K562 (cell line): ENCODE measurements at regions of chr2 and their contacts with region 1.

Region 1: DNA sequence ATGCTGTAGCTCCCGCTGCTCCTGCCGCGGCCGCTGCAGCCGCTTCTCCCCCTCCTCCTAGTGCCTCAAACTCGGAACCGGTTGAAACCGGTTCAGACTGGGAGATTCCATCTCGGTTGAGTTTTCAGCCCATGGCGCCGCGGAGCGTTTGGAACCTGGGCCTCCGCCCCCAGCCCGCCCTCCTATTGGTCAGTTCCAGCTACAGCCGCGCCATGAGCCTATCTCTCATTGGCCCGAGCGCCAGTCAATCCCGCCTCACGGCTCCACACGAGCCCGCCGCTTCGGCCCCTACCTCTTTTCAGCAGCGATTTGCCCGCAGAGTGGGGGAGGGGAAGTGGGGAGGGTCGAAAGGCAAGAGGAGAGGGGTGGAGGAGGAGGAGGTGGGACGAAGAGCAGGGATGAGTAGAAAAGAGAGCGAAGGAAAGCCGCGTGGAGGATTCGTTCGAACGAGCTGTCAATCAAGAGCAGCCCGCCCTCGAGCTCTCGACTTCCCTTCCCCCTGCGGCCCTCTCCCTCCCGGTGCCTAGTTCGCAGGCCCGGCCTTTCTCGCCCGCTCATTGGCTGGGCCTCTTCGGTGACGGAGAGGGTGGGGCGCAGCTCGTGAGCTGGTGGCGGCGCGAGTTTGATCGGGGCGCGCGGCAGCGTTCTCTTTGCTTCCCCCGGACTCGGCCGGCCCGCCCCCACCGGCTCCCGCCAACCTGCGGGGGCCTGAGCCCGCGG is at the start of gene XPO1:
- DNase-seq: peak; percentile 95 to 100 (median 97)
- ATAC-seq: peak; percentile 90
- H3K4me3 ChIP-seq: peak within 1 kb of the TSS; percentile 76
- H3K27ac ChIP-seq: peak within 1 kb of the TSS; percentile 98
- H3K4me1 ChIP-seq: peaks cover 19 to 28% of the 10 kb centered on the region in 2 experiments
- H3K27me3 ChIP-seq: no peaks in the 10 kb centered on the region
- CTCF ChIP-seq: no peak; a peak in 1 of 6 replicates
- EP300 ChIP-seq: 0 out of 2 replicates have a peak, but pooled peaks have one; percentile 46
- POLR2A ChIP-seq: peak; percentile 44; the same call in 1 of the 2 replicates
- RAD21 ChIP-seq: no peak
- polyA plus RNA-seq, gene XPO1: 86.2 to 91.8 TPM

Region 2: DNA sequence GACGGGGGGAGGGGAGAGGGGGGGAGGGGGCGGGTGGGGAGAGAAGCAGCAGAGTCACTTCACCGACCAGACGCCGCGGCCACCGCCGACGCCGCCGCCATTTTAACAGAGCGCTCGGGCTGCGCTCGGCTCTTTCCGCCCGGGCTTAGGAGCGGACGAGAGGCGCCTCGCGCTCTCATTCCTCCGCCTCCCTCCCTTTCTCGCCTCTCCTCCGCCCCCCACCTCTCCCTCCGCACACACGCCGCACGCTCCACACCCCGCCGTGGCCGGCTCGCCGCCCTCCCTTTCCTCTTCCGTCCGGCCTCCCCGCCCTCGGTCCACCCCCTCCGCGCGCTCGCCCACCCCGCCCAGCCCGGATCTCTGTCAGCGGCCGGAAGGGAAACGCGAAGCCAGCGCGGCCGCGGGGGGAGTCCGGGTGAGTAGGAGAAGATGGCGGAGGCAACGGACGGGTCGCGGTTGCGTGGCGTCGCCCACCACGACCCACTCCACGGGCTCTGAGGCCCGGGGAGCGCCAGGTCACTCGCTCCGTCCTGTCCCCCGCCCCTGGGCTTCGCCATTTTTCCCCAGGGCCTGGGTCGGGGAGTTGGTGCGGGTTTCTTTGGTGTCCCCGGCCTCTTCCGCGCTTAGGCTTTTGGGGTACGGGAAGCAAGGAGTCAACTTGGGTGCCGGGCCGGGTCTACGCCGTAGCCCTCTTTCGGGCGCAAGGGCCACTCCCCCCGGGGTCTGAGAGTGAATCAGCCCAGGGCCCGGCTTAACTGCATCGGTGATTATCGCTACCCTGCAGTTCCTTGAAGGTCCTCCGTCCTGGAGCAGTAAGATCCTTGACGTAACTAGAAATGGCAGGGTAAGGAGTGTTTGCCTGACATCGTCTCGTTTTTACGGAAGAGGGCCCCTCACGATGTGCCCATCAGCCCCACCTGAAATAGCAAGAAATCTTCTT is 67.1 kb before region 1 on chr2 and contains the start of gene USP34:
- CTCF ChIA-PET with region 1: no interaction called
- POLR2A ChIA-PET with region 1: no interaction called
- in situ Hi-C with region 1: no loop called
- intact Hi-C with region 1: loop called (anchors 2 kb)
- DNase-seq: peak; percentile 86 to 95 (median 90)
- ATAC-seq: peak; percentile 90
- H3K4me3 ChIP-seq: peak within 1 kb of the TSS; percentile 100
- H3K27ac ChIP-seq: peak within 1 kb of the TSS; percentile 100
- H3K4me1 ChIP-seq: peaks cover 14 to 20% of the 10 kb centered on the region in 2 experiments; a peak in 4 of 5 replicates
- H3K27me3 ChIP-seq: no peaks in the 10 kb centered on the region
- CTCF ChIP-seq: no peak
- EP300 ChIP-seq: peak; percentile 15; the same call in 1 of the 2 replicates
- POLR2A ChIP-seq: peak; percentile 93
- RAD21 ChIP-seq: 0 out of 4 replicates have a peak, but pooled peaks of 1 of the 2 experiments have one; percentile 8
- polyA plus RNA-seq, gene USP34: 19.8 to 38.7 TPM

Region 3: DNA sequence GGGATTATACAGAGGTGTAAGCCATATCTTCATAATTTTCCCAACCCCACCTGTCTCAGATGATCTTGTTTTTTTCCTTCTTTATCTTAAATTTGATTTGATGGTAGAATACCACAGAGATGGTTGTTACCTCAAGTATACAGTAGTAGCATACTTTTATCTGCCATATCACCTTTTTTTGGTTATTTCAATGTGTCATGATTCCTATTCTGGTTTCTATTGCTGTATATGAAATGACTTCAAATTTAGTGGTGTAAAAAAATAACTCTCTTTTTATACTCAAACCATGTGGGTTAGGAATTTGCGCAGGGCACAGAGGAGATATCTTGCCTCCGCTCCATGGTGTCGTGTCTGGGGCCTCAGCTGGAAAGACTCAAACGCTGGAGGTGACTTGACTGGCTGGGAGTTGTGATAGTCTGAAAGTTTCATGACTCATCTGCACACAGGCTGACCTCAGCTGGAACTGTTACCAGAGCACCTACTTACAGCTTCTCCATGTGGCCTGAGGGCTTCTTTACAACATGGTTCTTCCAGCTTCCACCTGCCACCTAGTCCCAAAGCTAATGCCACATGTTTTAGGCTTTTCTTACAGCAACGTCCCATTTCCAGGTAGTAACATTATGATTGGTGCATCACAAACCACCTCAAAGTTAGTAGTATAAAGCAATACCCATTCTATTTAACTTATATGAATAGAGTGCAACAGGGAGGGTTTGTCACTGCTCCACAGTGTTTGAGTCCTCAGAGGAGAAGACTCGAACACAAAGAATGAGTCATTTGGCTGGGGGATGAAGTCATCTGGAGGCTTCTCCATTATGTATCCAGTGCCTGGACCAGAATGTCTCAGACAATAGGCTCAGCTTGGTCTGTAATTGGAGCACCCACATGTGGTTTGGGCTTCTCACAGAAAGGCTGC is 82.1 kb after region 1 on chr2:
- CTCF ChIA-PET with region 1: no interaction called
- POLR2A ChIA-PET with region 1: interaction called, 3 read pairs
- in situ Hi-C with region 1: no loop called
- intact Hi-C with region 1: loop called (anchors 1 kb)
- DNase-seq: peak; percentile 59 to 86 (median 70)
- ATAC-seq: peak; percentile 96
- H3K4me3 ChIP-seq: no peak overlapping the region
- H3K27ac ChIP-seq: peak overlapping the region; percentile 86
- H3K4me1 ChIP-seq: peaks cover 0 to 13% of the 10 kb centered on the region in 2 experiments; a peak in 3 of 5 replicates
- H3K27me3 ChIP-seq: no peaks in the 10 kb centered on the region
- CTCF ChIP-seq: no peak
- EP300 ChIP-seq: peak; percentile 50; the same call in 1 of the 2 replicates
- POLR2A ChIP-seq: no peak
- RAD21 ChIP-seq: peak; percentile 5 to 30; a peak in 2 of 4 replicates

Region 4: DNA sequence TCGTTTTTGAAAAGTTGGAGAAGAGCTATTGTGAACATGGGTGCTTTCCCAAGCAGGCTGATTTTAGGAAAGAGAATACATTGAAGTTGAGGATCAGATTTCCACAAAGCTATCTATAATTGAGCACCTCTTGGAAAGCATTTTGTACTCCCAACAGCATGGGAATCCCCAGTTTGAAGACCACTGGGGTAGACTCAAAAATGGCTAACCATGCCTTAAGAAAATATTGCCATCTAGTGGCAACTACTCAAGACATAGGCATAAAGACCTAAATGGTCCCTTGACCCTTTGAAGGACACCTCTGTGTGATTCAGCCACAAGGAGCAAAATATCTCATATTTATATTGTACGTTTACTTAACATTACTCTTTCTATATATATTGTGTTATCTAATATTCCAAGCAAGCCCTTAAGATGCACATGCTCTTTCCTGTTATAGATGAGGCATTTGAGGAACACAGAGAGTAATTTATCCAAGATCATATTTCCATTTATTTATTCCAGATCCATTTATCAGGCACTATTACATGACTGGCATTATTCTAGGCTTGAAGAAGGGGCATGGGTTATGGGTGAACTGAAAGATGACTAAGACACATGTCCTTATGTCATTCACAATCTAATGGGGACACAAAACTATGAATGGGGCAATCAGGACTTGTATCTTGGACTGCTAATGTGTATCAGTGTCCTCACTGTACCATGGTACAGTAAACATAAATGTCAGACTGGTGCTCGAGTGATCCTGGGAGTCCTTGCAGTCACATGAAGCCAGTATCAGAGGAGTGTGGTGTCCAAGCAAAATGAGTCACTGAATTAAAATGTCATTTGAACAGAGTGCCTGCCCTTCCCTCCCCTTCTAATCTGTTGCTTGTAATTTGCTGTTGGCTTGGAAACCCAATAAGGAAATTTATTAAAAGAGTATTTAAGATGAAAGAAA is 120.8 kb after region 1 on chr2:
- CTCF ChIA-PET with region 1: no interaction called
- POLR2A ChIA-PET with region 1: interaction called, 3 read pairs
- in situ Hi-C with region 1: no loop called
- intact Hi-C with region 1: loop called (anchors 5 kb)
- DNase-seq: peak; percentile 40 to 66 (median 50)
- ATAC-seq: peak; percentile 94
- H3K4me3 ChIP-seq: no peak overlapping the region
- H3K27ac ChIP-seq: 0 out of 3 replicates have a peak overlapping the region, but pooled peaks have one; percentile 7
- H3K4me1 ChIP-seq: 0 out of 5 replicates have a peak, but pooled peaks cover 0 to 2% of the 10 kb centered on the region in 2 experiments
- H3K27me3 ChIP-seq: no peaks in the 10 kb centered on the region; a peak in 1 of 5 replicates
- CTCF ChIP-seq: peak; percentile 45 to 72 (median 69)
- EP300 ChIP-seq: no peak
- POLR2A ChIP-seq: no peak
- RAD21 ChIP-seq: peak; percentile 57 to 88

Region 5: DNA sequence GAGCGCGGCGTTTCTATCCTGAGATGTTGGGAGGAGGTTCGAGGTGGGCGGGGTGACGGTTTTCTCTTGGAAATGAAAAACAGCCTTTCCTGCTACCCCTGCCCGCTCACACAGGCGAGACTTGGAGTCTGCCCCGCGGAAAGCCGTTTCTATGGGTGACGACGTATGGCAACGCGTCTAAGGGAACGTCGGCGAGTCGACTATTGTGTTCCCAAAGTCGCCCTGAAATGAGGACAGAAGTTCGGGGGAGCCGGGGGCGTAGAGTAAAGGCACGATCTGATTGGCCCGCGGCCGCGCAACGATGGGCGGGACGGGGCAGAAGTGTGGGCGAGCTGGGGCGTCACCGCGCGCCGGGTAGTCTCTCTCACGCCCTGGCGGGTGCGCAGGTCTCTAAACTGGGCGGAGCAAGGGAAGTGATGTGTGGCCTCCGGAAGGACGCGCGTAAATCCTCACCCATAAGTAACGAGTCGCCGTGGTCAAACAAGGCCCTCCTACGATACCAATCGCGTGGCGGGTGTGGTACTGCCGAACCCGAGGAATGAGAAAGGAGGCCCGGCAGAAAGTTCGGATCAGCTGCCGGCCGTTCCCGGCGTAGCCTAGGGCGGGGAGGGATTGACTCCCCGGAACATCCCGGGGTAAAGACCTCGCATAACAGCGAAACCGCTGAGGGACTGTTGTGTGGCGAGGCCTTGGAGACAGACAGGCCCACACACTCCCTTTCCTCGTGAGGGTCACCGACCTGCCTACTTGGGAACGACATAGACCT is 225.9 kb after region 1 on chr2:
- CTCF ChIA-PET with region 1: no interaction called
- POLR2A ChIA-PET with region 1: interaction called, 6 read pairs
- in situ Hi-C with region 1: no loop called
- intact Hi-C with region 1: loop called (anchors 2 kb)
- DNase-seq: peak; percentile 96 to 98 (median 96)
- ATAC-seq: peak; percentile 99
- H3K4me3 ChIP-seq: peak overlapping the region; percentile 48
- H3K27ac ChIP-seq: peak overlapping the region; percentile 94
- H3K4me1 ChIP-seq: peaks cover 0 to 14% of the 10 kb centered on the region in 2 experiments; a peak in 2 of 5 replicates
- H3K27me3 ChIP-seq: no peaks in the 10 kb centered on the region
- CTCF ChIP-seq: no peak; a peak in 1 of 6 replicates
- EP300 ChIP-seq: peak; percentile 24; the same call in 1 of the 2 replicates
- POLR2A ChIP-seq: peak; percentile 91
- RAD21 ChIP-seq: no peak

Region 6: GRCh38 chr2:61888267-61889055 is 350.1 kb after region 1 on chr2 and contains the start of gene CCT4:
- CTCF ChIA-PET with region 1: no interaction called
- POLR2A ChIA-PET with region 1: no interaction called
- in situ Hi-C with region 1: no loop called
- intact Hi-C with region 1: loop called (anchors 2 kb)
- DNase-seq: peak; percentile 73 to 92 (median 79)
- ATAC-seq: peak; percentile 77
- H3K4me3 ChIP-seq: peak within 1 kb of the TSS; percentile 78
- H3K27ac ChIP-seq: peak within 1 kb of the TSS; percentile 87
- H3K4me1 ChIP-seq: peaks cover 2 to 21% of the 10 kb centered on the region in 2 experiments; a peak in 4 of 5 replicates
- H3K27me3 ChIP-seq: no peaks in the 10 kb centered on the region
- CTCF ChIP-seq: no peak
- EP300 ChIP-seq: no peak; the same call in 1 of the 2 replicates
- POLR2A ChIP-seq: peak; percentile 98
- RAD21 ChIP-seq: no peak
- polyA plus RNA-seq, gene CCT4: 101 to 157 TPM